Activated CD4-positive, alpha-beta T cell treated with anti-CD3 and anti-CD28 coated beads for 36 hours (primary cell): ENCODE measurements at regions of chr1 and their contacts with region 1.

Region 1: DNA sequence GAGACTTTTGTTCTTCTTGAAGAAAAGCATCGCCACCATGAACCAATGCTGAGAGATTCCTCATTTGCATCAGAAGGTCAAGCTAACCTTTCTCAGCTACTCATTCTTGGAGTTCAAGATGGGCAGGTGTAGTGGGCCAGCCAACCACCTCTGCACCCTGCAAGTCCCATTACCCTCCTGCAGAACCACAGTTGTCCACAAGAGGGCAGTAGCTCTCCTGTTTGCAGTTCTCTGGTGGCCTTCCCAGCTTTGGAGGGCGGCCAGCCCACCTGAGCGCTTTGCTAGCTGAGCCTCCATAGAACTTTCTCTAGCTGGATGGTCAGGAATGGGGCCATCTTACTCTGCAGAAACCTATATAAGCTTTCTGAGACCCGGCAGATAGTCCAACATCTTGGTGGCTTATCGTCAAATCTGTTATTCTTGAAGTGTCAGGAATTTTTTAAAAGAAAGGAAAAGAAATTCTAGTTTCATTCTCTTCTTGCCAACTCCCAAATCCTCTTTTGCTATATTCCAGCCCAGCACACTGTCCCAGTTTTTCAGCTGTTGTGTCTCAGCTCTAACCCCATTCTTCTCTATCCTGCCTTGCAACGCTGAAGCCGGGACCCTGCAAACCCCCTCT is 11.0 kb upstream of the LMX1A start:
- DNase-seq: peak; percentile 89
- ATAC-seq: peak; percentile 57
- H3K4me3 Mint-ChIP-seq: no peak overlapping the region
- H3K27ac Mint-ChIP-seq: no peak overlapping the region
- H3K4me1 Mint-ChIP-seq: no peaks in the 10 kb centered on the region
- H3K27me3 Mint-ChIP-seq: peaks cover 62% of the 10 kb centered on the region

Region 2: GRCh38 chr1:165116732-165117131 is 250.8 kb before region 1 on chr1:
- CTCF ChIA-PET with region 1: no interaction called
- POLR2A ChIA-PET with region 1: no interaction called
- intact Hi-C with region 1: loop called in 1 of 2 experiments (anchors 5 kb)
- DNase-seq: no peak
- ATAC-seq: no peak
- H3K4me3 Mint-ChIP-seq: no peak overlapping the region
- H3K27ac Mint-ChIP-seq: no peak overlapping the region
- H3K4me1 Mint-ChIP-seq: no peaks in the 10 kb centered on the region
- H3K27me3 Mint-ChIP-seq: peaks cover 31% of the 10 kb centered on the region

Region 3: DNA sequence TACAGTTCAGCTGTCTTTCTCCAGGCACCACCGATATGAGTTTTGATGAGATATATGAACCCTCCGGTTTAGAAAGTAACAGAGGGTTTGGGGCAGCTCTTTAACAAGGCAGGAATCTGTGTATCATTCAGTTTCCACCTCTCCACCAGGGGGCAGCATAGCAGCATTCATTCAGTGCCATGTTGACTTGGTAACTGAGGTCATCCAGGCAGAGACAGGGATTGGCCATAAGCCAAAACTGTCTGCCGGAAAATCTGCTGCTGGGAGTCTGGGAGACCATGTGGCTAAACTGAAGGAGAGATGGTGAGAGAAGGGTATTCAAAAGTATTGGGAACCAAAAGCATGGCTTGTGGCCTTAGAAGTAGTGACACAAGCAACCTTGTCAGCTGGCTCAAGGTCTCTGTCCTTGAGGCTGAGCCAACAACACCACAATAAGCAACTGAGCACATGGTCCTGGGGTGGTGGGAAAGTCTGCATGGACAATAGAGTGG is 109.5 kb before region 1 on chr1:
- CTCF ChIA-PET with region 1: interaction called, 7 read pairs
- POLR2A ChIA-PET with region 1: no interaction called
- intact Hi-C with region 1: loop called in 1 of 2 experiments (anchors 1 kb)
- DNase-seq: peak; percentile 73
- ATAC-seq: no peak
- H3K4me3 Mint-ChIP-seq: no peak overlapping the region
- H3K27ac Mint-ChIP-seq: no peak overlapping the region
- H3K4me1 Mint-ChIP-seq: no peaks in the 10 kb centered on the region
- H3K27me3 Mint-ChIP-seq: peaks cover 19% of the 10 kb centered on the region

Region 4: DNA sequence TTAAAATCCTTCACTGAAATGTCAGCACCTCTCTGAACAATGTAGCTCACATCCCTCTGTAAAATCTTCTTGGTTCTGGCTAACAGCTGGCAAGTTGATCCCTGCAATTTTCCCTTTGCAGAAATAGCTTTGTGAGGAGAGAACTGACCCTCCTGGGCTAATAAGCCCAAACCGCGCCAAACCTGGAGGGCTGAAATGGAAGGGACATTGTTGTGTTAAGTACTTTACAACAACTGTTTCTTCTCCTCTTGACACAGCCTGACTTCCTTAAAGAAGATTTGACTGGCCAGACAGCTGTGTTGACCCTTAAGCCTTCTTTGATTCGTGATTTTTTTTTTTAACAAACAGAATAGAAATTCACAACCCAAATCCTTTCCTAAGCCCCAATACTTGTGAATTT is 16.6 kb before region 1 on chr1:
- CTCF ChIA-PET with region 1: interaction called, 56 read pairs
- POLR2A ChIA-PET with region 1: no interaction called
- intact Hi-C with region 1: no loop called
- DNase-seq: no peak
- ATAC-seq: no peak
- H3K4me3 Mint-ChIP-seq: no peak overlapping the region
- H3K27ac Mint-ChIP-seq: no peak overlapping the region
- H3K4me1 Mint-ChIP-seq: peaks cover 12% of the 10 kb centered on the region
- H3K27me3 Mint-ChIP-seq: peaks cover 75% of the 10 kb centered on the region

Region 5: GRCh38 chr1:165383599-165384405 is 16.3 kb after region 1 on chr1:
- CTCF ChIA-PET with region 1: interaction called, 21 read pairs
- POLR2A ChIA-PET with region 1: no interaction called
- intact Hi-C with region 1: no loop called
- DNase-seq: no peak
- ATAC-seq: no peak
- H3K4me3 Mint-ChIP-seq: no peak overlapping the region
- H3K27ac Mint-ChIP-seq: no peak overlapping the region
- H3K4me1 Mint-ChIP-seq: no peaks in the 10 kb centered on the region
- H3K27me3 Mint-ChIP-seq: peaks cover 46% of the 10 kb centered on the region

Region 6: DNA sequence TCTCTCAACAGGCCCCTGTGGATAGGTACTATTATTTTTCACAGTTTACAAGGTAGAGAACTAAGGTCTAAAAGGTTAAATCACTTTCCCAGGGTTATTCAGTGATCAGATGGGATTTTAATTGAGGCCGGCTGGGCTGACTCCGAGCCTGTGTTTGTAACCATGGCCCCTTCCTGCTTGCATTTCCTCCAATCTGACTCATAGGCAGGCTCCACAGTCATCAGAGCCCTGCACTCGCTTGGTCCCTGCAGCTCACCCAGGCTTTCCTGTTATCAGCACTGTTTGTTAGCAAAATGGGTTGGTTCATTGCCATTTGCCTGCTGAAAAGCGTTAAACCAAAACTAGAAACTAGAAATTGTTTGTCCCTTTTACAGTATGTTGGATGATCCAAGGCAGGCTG is 30.5 kb after region 1 on chr1:
- CTCF ChIA-PET with region 1: interaction called, 30 read pairs
- POLR2A ChIA-PET with region 1: no interaction called
- intact Hi-C with region 1: no loop called
- DNase-seq: peak; percentile 40
- ATAC-seq: peak; percentile 84
- H3K4me3 Mint-ChIP-seq: no peak overlapping the region
- H3K27ac Mint-ChIP-seq: no peak overlapping the region
- H3K4me1 Mint-ChIP-seq: peaks cover 7% of the 10 kb centered on the region
- H3K27me3 Mint-ChIP-seq: peaks cover 40% of the 10 kb centered on the region

Region 7: GRCh38 chr1:165807613-165808012 is 440.1 kb after region 1 on chr1:
- CTCF ChIA-PET with region 1: no interaction called
- POLR2A ChIA-PET with region 1: no interaction called
- intact Hi-C with region 1: no loop called
- DNase-seq: no peak
- ATAC-seq: no peak
- H3K4me3 Mint-ChIP-seq: no peak overlapping the region
- H3K27ac Mint-ChIP-seq: no peak overlapping the region
- H3K4me1 Mint-ChIP-seq: no peaks in the 10 kb centered on the region
- H3K27me3 Mint-ChIP-seq: peaks cover 4% of the 10 kb centered on the region